T-cell (primary cell): ENCODE measurements at regions of chr10 and their contacts with region 1.

Region 1: DNA sequence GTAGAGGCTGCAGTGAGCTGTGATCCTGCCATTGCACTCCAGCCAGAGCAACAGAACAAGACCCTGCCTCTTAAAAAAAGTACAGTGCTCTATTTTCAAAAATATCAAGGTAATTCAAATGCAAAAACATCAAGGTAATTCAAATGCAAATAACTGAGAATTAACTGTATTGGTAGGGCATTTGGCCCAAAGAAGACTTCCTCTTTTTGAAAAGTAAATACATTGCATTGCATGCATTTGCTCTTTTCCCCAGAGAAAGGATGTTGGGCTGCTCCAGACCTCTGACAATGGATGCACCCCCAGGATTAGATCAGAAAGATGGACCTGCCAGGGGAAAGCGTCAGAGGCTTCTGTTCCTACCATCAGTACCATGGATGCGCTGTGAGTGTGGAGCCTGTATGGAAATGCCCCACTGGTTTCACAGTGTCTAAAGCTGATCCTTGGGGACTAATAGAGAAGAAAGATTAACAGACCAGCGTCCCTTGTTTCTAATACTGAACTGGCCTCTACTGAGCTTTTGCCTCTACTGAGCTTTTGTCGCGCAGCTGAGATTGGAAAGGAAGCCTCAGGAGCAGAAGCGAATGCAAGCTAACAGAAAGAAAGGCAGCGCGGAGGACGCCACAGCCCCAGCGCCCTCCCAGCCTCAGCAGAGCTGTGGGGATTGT is 93.5 kb upstream of the LYZL2 start:
- DNase-seq: no peak
- ATAC-seq: no peak
- H3K4me3 ChIP-seq: no peak overlapping the region
- H3K4me3 Mint-ChIP-seq: no peak overlapping the region
- H3K27ac ChIP-seq: no peak overlapping the region
- H3K27ac Mint-ChIP-seq: no peak overlapping the region
- H3K4me1 ChIP-seq: peaks cover 0 to 12% of the 10 kb centered on the region in 2 experiments
- H3K4me1 Mint-ChIP-seq: peaks cover 0 to 2% (median 0%) of the 10 kb centered on the region in 3 donors
- H3K27me3 ChIP-seq: peaks cover 0 to 4% of the 10 kb centered on the region in 2 experiments
- H3K27me3 Mint-ChIP-seq: peaks cover 0 to 6% of the 10 kb centered on the region in 2 donors

Region 2: DNA sequence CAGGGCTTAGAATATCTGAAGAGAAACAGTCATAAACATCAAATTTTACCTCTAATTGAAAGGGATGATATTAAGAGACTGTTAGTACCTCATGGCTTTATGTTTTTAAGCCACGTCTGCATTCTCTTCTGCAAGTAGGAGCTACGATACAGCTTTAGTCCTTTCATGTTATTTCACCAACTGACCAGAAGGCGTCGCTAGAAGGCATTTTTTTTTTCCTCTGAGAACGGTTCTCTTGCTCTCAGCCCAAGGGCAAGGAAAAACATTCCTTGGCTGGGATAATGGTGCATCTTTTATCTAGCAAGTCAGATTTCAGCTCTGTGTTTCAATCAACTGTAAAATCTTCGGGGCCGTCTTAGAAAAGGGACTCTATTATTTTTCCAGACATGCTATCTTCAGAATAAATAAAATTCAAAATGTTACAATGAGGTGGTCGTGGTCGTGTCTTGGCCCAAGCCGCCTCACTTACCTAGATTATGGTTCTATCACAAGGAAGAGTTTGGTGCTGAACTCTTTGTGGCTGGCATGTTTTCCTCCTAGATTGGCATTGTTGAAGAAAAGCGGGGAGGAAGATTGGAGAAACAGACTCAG is 52.0 kb before region 1 on chr10:
- CTCF ChIA-PET with region 1: interaction called, 4 to 16 read pairs
- POLR2A ChIA-PET with region 1: no interaction called
- DNase-seq: peak in 14 of 35 experiments; percentile 4 to 80 (median 14)
- ATAC-seq: peak; percentile 61 to 73 (median 70)
- H3K4me3 ChIP-seq: no peak overlapping the region
- H3K4me3 Mint-ChIP-seq: peak overlapping the region; percentile 31 to 64 (median 54)
- H3K27ac ChIP-seq: no peak overlapping the region
- H3K27ac Mint-ChIP-seq: no peak overlapping the region
- H3K4me1 ChIP-seq: peaks cover 0 to 2% of the 10 kb centered on the region in 2 experiments
- H3K4me1 Mint-ChIP-seq: peaks cover 0 to 8% (median 4%) of the 10 kb centered on the region in 3 donors
- H3K27me3 ChIP-seq: peaks cover 0 to 18% of the 10 kb centered on the region in 2 experiments
- H3K27me3 Mint-ChIP-seq: peaks cover 6 to 11% of the 10 kb centered on the region in 2 donors

Region 3: GRCh38 chr10:30687698-30688219 is 35.3 kb before region 1 on chr10:
- CTCF ChIA-PET with region 1: interaction called, 20 to 35 read pairs
- POLR2A ChIA-PET with region 1: no interaction called
- DNase-seq: peak; percentile 29 to 86 (median 67)
- ATAC-seq: peak; percentile 63 to 80 (median 75)
- H3K4me3 ChIP-seq: no peak overlapping the region
- H3K4me3 Mint-ChIP-seq: no peak overlapping the region
- H3K27ac ChIP-seq: no peak overlapping the region
- H3K27ac Mint-ChIP-seq: no peak overlapping the region
- H3K4me1 ChIP-seq: peaks cover 0 to 3% of the 10 kb centered on the region in 2 experiments
- H3K4me1 Mint-ChIP-seq: peaks cover 0 to 15% (median 9%) of the 10 kb centered on the region in 3 donors
- H3K27me3 ChIP-seq: peaks cover 0 to 16% of the 10 kb centered on the region in 2 experiments
- H3K27me3 Mint-ChIP-seq: peaks cover 12 to 33% of the 10 kb centered on the region in 2 donors

Region 4: DNA sequence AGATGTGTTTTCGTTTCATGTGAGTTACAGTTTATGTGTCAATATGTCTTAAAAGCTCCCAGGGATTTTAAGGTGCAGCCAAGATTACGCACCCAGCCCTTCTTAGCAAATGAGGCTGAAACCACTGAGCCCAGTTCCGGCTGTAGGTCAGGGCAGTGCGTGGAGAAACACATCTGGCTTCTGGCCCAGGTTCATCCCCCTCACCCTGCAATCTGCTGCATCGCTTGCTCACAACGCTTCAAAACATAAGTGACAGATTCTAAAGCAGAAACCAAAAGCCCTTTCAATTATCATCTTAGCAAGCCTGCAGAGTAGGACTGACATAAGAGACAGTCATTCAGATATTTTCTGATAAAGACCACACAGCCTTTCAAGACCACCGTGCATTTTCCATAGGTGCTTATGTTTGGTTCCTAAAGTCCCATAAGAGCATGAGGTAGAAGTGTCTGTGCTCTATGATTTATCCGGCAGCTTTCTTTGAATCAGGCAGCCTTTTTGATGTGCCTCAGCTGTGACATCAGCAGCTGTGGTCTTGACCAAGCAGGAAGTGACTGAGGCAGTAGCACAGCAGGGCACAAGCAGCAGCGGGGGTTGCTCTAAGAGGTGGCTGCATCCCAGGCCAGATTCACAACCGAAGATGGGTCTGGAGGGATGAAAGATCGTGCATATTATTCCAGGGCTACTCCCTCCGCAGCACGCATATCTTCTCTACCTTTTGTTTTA is 21.5 kb before region 1 on chr10:
- CTCF ChIA-PET with region 1: interaction called, 9 to 10 read pairs
- POLR2A ChIA-PET with region 1: interaction called in 1 of 2 experiments, 3 read pairs
- DNase-seq: peak; percentile 32 to 85 (median 68)
- ATAC-seq: peak; percentile 64 to 77 (median 74)
- H3K4me3 ChIP-seq: peak overlapping the region in 1 of 2 donors; percentile 48
- H3K4me3 Mint-ChIP-seq: peak overlapping the region; percentile 63 to 78 (median 76)
- H3K27ac ChIP-seq: peak overlapping the region; percentile 83
- H3K27ac Mint-ChIP-seq: peak overlapping the region; percentile 97 to 99
- H3K4me1 ChIP-seq: peaks cover 31 to 72% of the 10 kb centered on the region in 2 experiments
- H3K4me1 Mint-ChIP-seq: peaks cover 85 to 94% (median 91%) of the 10 kb centered on the region in 3 donors
- H3K27me3 ChIP-seq: no peaks in the 10 kb centered on the region
- H3K27me3 Mint-ChIP-seq: no peaks in the 10 kb centered on the region

Region 5: GRCh38 chr10:31025142-31025541 is 302.1 kb after region 1 on chr10:
- CTCF ChIA-PET with region 1: interaction called in 1 of 2 experiments, 11 read pairs
- POLR2A ChIA-PET with region 1: no interaction called
- DNase-seq: no peak
- ATAC-seq: no peak
- H3K4me3 ChIP-seq: no peak overlapping the region
- H3K4me3 Mint-ChIP-seq: no peak overlapping the region
- H3K27ac ChIP-seq: no peak overlapping the region
- H3K27ac Mint-ChIP-seq: no peak overlapping the region
- H3K4me1 ChIP-seq: no peaks in the 10 kb centered on the region
- H3K4me1 Mint-ChIP-seq: peaks cover 2 to 10% (median 6%) of the 10 kb centered on the region in 3 donors
- H3K27me3 ChIP-seq: no peaks in the 10 kb centered on the region
- H3K27me3 Mint-ChIP-seq: no peaks in the 10 kb centered on the region